ENCODE measurements at regions of chr4 and their contacts with region 1.

Region 1: DNA sequence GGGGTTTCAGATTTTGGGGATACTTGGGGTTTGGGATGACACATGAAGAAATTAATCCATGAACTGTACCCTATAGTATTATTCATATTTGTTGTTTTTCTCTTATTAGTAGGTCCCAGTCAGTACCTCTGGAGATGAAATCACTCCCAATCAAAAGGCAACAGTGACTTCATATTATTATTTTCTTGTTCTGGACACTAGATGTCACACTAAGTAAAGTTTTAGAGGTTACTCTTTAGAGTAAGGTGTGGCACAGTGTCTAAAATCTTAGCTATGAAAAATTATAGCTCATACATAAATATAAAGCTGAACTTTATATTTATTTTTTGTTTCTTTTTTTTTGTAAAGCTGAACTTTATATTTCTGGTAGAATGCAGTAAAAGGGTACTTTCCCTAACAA is 35.1 kb downstream of the FAM114A1 start:
- DNase-seq: no peak
- H3K4me3 ChIP-seq: no peak overlapping the region
- H3K27ac ChIP-seq: peak overlapping the region in 2 of 59 donors; percentile 6 to 39
- H3K27me3 ChIP-seq: no peaks in the 10 kb centered on the region
- CTCF ChIP-seq: peak in 55 of 56 donors; percentile 30 to 79 (median 61)

Region 2: DNA sequence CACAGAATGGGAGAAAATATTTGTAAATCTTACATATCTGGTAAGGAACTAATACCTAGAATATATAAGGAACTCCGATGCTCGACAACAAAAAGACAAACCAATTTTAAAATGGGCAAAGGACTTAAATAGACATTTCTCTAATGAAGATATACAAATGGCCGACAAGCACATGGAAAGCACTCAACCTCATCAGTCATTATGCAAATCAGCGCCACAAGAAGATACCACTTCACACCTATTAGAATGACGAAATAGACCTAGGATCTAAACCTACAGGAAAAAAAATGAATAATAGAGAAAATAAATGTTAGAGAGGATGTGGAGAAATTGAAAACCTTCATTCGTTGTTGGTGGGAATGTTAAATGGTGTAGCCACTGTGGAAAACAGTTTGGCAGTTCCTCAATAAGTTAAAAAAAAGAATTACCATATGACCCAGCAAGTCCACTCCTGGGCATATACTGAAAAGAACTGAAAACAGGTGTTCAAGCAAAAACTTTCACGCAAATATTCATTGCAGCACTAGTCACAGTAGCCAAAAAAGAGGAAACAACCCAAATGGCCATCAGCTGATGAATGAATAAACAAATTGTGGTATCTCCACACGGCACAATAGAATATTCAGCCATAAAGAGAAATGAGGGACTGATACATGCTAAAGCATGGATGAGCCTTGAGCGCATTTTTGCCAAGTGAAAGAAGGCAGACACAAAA is 222.3 kb after region 1 on chr4:
- intact Hi-C with region 1: loop called in 1 of 2 experiments (anchors 2 kb)
- DNase-seq: no peak
- H3K4me3 ChIP-seq: no peak overlapping the region
- H3K27ac ChIP-seq: no peak overlapping the region
- H3K27me3 ChIP-seq: no peaks in the 10 kb centered on the region
- CTCF ChIP-seq: no peak

Region 3: GRCh38 chr4:39134683-39135319 is 232.1 kb after region 1 on chr4:
- intact Hi-C with region 1: loop called in 1 of 2 experiments (anchors 1 kb)
- DNase-seq: no peak
- H3K4me3 ChIP-seq: peak overlapping the region in 30 of 59 donors; percentile 1 to 53 (median 20)
- H3K27ac ChIP-seq: peak overlapping the region in 37 of 59 donors; percentile 2 to 77 (median 38)
- H3K27me3 ChIP-seq: no peaks in the 10 kb centered on the region
- CTCF ChIP-seq: no peak

Measured in dorsolateral prefrontal cortex (tissue), 120 donors.